Uterus (tissue), 4 donors: ENCODE measurements at regions of chrX and their contacts with region 1.

Region 1: DNA sequence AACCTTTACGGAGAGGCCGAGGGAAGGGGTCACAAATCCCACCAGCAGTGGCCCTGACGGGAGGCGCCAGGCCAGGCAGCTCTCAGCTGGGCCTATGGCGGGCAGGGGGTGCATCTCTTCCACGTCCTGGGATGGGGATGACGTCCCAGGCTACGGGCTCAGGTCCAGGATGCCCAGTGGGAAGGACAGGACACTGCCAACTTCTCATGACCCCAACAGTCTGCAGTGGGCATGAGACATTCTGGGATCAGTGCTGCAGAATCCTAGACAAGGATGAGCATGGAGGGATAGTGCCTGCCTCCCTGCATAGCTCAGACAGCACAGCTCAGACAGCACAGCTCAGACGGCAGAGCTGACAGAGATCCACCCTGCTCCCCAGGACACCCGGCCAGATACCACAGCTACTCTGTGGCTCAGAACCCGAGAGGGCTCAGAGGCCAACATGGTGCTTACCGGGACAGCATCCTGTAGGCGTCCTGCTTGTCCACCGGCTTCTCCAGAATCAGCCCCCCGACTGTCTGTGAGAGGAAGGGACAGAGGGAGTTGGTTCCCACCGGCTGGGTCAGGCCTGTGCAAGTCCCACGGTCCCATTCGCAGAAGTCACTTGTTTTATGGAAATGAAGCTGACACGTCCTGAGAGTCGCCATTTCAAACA is 17.3 kb downstream of the ASMTL start:
- DNase-seq: no peak
- H3K4me3 ChIP-seq: no peak overlapping the region
- H3K27ac ChIP-seq: no peak overlapping the region
- H3K4me1 ChIP-seq: no peaks in the 10 kb centered on the region
- H3K27me3 ChIP-seq: no peaks in the 10 kb centered on the region
- CTCF ChIP-seq: no peak
- POLR2A ChIP-seq: no peak

Region 2: GRCh38 chrX:1391707-1392375 is 43.5 kb before region 1 on chrX and contains the start of gene SLC25A6:
- intact Hi-C with region 1: loop called (anchors 5 kb)
- DNase-seq: peak; percentile 98 to 100
- H3K4me3 ChIP-seq: peak within 1 kb of the TSS; percentile 96 to 99
- H3K27ac ChIP-seq: peak within 1 kb of the TSS; percentile 94 to 99
- H3K4me1 ChIP-seq: peaks cover 0 to 11% of the 10 kb centered on the region in 2 donors
- H3K27me3 ChIP-seq: no peaks in the 10 kb centered on the region
- CTCF ChIP-seq: peak in 2 of 4 experiments; percentile 2 to 32
- POLR2A ChIP-seq: peak; percentile 57 to 92
- total RNA-seq, gene SLC25A6: 140 to 289 (median 207) TPM